Ovary (tissue), 10 donors: ENCODE measurements at regions of chr15 and their contacts with region 1.

Region 1: GRCh38 chr15:52994290-52994689 is 204.2 kb upstream of the ONECUT1 start:
- DNase-seq: no peak
- H3K4me3 ChIP-seq: no peak overlapping the region
- H3K27ac ChIP-seq: no peak overlapping the region
- H3K4me1 ChIP-seq: no peaks in the 10 kb centered on the region
- H3K27me3 ChIP-seq: no peaks in the 10 kb centered on the region
- CTCF ChIP-seq: no peak
- EP300 ChIP-seq: no peak
- POLR2A ChIP-seq: no peak

Region 2: GRCh38 chr15:52936489-52936888 is 57.8 kb before region 1 on chr15:
- intact Hi-C with region 1: loop called in 1 of 4 experiments (anchors 10 kb)
- DNase-seq: no peak
- H3K4me3 ChIP-seq: no peak overlapping the region
- H3K27ac ChIP-seq: no peak overlapping the region
- H3K4me1 ChIP-seq: no peaks in the 10 kb centered on the region
- H3K27me3 ChIP-seq: no peaks in the 10 kb centered on the region
- CTCF ChIP-seq: no peak
- EP300 ChIP-seq: no peak
- POLR2A ChIP-seq: no peak